ENCODE measurements at regions of chr2 and their contacts with region 1.

Region 1: DNA sequence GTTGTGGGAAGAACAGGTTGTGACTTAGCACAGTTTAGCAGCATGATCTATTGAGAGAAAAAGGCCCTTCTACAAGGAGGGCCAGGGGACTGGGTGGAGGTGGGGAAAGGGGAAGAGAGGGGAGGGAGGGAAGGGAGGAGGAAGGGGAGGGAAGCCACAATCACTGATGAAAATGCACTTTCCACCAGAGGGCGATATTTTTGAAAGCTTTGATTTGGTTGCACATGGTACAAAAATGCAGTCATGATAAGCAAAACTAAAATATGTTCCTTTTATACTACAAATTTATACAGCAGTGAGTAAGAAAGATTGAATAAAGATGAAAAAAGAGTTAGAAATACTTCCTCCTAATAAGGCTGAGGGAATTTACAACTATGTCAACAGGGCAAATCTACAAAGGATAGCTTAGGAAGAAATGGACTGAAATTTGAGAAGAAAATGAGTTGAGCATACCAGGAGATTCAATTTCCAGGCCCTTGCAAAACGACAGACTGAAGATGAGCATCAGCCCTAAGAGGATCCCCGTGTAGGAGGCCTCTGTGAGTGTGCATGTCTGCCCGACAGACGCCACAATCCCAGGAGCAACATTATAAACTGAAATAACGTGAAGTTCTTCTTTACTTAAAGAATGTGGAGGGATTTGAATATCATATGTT is 17.2 kb downstream of the SH3YL1 start:
- H3K4me3 Mint-ChIP-seq: no peak overlapping the region
- H3K27ac Mint-ChIP-seq: no peak overlapping the region
- H3K4me1 Mint-ChIP-seq: no peaks in the 10 kb centered on the region
- H3K27me3 Mint-ChIP-seq: no peaks in the 10 kb centered on the region

Region 2: DNA sequence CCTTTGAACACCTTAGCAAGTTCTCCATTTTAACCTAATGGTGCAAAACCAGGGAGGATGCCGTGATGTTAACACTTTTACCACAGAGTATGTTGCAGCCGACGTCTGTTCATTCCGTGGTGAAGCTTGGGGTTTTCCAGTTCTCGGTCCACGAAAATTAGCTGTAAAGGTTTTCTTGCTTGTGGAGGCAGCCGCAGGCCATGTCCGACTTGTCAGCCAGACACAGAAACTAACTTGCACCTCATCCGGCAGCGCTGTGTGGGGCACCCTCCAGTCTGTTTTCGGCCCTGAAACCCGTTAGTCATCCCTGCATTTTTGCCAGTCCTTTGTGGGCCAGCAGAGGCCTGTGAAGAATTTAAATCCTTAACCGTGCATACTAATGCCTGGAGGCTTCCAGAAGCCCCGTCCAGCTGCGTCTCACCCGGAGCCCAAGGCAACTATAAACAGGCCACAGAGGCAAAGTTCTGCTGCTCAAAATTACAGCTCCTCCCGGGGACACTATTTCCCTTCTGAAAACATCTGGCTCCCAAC is 53.4 kb before region 1 on chr2:
- intact Hi-C with region 1: no loop called
- H3K4me3 Mint-ChIP-seq: no peak overlapping the region
- H3K27ac Mint-ChIP-seq: no peak overlapping the region
- H3K4me1 Mint-ChIP-seq: no peaks in the 10 kb centered on the region
- H3K27me3 Mint-ChIP-seq: no peaks in the 10 kb centered on the region

Region 3: DNA sequence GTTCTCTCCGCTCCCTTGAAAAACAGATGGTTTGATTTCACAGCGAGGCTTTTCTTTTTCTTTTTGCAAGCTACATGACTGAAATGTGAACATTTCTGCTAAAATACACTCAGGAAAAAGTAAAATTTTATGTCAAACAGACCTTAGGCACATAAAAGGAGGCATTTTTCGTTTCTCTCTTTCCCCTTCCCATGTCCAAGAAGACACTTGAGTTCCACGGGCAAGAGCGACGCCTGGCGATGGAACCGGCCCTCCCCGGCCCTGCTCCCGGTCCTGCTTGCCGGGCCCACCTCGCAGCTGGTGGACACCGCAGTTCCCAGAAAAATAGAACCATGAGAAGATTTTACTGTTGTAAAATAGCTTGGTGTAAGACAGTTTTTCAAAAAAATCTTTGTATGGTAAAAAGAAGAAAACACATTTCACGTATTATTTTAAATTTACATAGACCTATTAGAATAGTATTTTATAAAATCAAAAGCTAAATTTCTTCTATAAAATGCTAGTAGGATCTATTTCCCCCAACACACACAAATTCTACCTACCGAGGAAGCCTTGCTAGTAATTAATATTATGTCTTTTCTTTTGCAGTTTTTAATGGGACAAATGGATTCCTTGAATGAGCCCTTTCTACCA is 43.6 kb after region 1 on chr2:
- intact Hi-C with region 1: loop called (anchors 5 kb)
- H3K4me3 Mint-ChIP-seq: peak overlapping the region; percentile 35
- H3K27ac Mint-ChIP-seq: no peak overlapping the region
- H3K4me1 Mint-ChIP-seq: no peaks in the 10 kb centered on the region
- H3K27me3 Mint-ChIP-seq: peaks cover 50% of the 10 kb centered on the region

Region 4: GRCh38 chr2:348361-348916 is 101.8 kb after region 1 on chr2:
- intact Hi-C with region 1: no loop called
- H3K4me3 Mint-ChIP-seq: no peak overlapping the region
- H3K27ac Mint-ChIP-seq: no peak overlapping the region
- H3K4me1 Mint-ChIP-seq: no peaks in the 10 kb centered on the region
- H3K27me3 Mint-ChIP-seq: no peaks in the 10 kb centered on the region

Region 5: GRCh38 chr2:636641-637405 is 390.2 kb after region 1 on chr2:
- intact Hi-C with region 1: loop called (anchors 2 kb)
- H3K4me3 Mint-ChIP-seq: peak overlapping the region; percentile 77
- H3K27ac Mint-ChIP-seq: peak overlapping the region; percentile 33
- H3K4me1 Mint-ChIP-seq: peaks cover 7% of the 10 kb centered on the region
- H3K27me3 Mint-ChIP-seq: peaks cover 17% of the 10 kb centered on the region